Naive thymus-derived CD8-positive, alpha-beta T cell (primary cell): ENCODE measurements at regions of chr17 and their contacts with region 1.

Region 1: DNA sequence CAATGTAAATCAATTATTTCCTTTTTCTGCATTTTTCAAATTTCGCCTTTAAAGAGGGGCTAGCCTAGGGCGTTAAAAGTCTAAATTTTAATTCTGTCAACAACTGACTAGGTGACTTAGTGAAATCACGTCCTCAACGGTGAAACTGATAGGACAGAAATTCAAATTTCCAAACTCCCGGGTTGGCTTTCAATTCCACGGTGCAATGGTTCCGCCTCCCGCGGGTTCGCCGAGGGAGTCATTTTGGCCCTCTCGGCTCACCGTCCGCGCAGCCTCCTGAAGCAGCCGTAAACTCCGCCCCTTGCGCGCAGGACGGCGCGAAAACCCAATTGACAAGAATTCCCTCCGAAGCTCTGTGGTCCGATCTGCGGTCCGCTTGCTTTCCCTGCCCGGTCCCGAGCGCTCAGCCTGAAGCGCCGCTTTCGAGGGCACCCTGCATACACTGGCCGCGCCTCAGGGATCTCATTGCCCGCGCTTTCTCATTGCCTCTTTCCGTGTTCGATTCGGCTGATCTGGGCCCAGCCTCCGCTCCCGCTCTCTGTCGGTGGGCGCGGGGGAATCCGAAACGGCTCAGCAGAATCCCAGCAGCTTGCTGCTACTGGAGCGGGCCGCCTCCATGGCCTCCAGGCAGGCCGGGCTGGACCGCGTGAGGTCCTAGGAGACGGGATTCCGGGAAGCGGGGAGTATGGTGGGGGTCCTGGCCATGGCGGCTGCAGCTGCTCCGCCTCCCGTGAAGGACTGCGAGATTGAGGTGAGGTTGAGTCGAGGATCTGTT is at the start of gene ATAD5:
- DNase-seq: peak; percentile 79 to 92 (median 87)
- ATAC-seq: peak; percentile 97
- H3K4me3 Mint-ChIP-seq: peak within 1 kb of the TSS; percentile 92 to 99 (median 98)
- H3K27ac Mint-ChIP-seq: peak within 1 kb of the TSS; percentile 81 to 95 (median 92)
- H3K4me1 Mint-ChIP-seq: peaks cover 12 to 28% (median 26%) of the 10 kb centered on the region in 4 donors
- H3K27me3 Mint-ChIP-seq: no peaks in the 10 kb centered on the region
- polyA plus RNA-seq, gene ATAD5: 0.95 to 1.5 (median 1.5) TPM

Region 2: DNA sequence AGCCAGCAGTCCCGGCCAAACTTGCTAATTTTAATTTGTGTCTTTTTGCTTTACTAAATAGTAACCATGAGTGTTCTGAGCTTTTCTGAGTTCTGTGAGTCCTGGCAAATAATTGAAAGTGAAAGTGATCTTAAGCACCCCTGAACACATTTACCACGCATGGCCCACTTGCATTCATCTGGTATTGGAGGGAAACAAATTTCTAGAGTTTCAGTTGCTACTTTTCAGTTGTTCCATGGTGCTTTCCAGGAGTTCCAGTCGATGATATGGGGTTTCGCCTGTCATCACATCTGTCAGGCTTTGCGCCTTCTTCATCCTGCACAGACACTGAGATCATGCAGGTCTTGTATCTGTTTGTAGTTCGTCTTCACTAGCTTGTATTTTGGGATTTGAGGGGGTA is 51.5 kb before region 1 on chr17:
- POLR2A ChIA-PET with region 1: no interaction called
- DNase-seq: peak in 1 of 10 donors; percentile 6
- ATAC-seq: no peak
- H3K4me3 Mint-ChIP-seq: no peak overlapping the region
- H3K27ac Mint-ChIP-seq: peak overlapping the region; percentile 6 to 90 (median 62)
- H3K4me1 Mint-ChIP-seq: peaks cover 0 to 14% (median 9%) of the 10 kb centered on the region in 4 donors
- H3K27me3 Mint-ChIP-seq: no peaks in the 10 kb centered on the region

Region 3: GRCh38 chr17:30808785-30809286 is 23.0 kb before region 1 on chr17:
- POLR2A ChIA-PET with region 1: interaction called, 413 read pairs
- DNase-seq: peak in 9 of 10 donors; percentile 36 to 85 (median 61)
- ATAC-seq: peak; percentile 91 to 94
- H3K4me3 Mint-ChIP-seq: peak overlapping the region; percentile 82 to 93 (median 90)
- H3K27ac Mint-ChIP-seq: peak overlapping the region; percentile 96 to 99 (median 98)
- H3K4me1 Mint-ChIP-seq: peaks cover 24 to 82% (median 68%) of the 10 kb centered on the region in 4 donors
- H3K27me3 Mint-ChIP-seq: no peaks in the 10 kb centered on the region

Region 4: DNA sequence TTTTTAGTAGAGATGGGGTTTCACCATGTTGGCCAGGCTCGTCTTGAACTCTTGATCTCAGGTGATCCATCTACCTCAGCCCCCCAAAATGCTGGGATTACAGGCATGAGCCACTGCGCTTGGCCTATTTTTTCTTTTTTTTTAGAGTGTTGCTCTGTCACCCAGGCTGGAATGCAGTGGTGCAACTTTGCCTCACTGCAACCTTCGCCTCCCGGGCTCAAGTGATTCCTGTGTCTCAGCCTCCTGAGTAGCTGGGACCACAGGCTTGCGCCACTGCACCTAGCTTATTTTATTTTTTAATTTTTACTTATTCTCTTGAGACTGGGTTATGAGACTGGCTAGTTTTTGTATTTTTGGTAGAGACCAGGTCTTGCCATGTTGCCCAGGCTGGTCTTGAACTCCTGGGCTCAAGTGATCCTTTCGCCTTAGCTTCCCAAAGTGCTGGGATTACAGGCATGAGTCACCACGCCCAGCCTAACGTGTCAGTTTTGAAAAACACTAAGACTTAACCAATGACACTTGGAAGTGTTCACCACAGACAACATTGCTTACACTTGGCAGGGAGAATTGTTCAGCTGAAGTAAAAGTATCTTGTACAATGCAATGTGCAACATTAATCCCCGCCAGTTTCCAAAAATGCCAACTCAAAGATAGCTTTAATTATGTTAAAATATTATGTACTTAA is 26.9 kb after region 1 on chr17:
- POLR2A ChIA-PET with region 1: no interaction called
- DNase-seq: no peak
- ATAC-seq: no peak
- H3K4me3 Mint-ChIP-seq: no peak overlapping the region
- H3K27ac Mint-ChIP-seq: peak overlapping the region in 2 of 10 donors; percentile 25 to 34
- H3K4me1 Mint-ChIP-seq: peaks cover 0 to 2% (median 0%) of the 10 kb centered on the region in 4 donors
- H3K27me3 Mint-ChIP-seq: no peaks in the 10 kb centered on the region